AG04450 (cell line): ENCODE measurements at regions of chr17 and their contacts with region 1.

Region 1: GRCh38 chr17:76278952-76279741 is 14.0 kb downstream of the UBALD2 start:
- DNase-seq: peak; percentile 50
- H3K4me3 ChIP-seq: no peak overlapping the region
- H3K27ac ChIP-seq: no peak overlapping the region
- H3K27me3 ChIP-seq: no peaks in the 10 kb centered on the region
- CTCF ChIP-seq: peak; percentile 95

Region 2: DNA sequence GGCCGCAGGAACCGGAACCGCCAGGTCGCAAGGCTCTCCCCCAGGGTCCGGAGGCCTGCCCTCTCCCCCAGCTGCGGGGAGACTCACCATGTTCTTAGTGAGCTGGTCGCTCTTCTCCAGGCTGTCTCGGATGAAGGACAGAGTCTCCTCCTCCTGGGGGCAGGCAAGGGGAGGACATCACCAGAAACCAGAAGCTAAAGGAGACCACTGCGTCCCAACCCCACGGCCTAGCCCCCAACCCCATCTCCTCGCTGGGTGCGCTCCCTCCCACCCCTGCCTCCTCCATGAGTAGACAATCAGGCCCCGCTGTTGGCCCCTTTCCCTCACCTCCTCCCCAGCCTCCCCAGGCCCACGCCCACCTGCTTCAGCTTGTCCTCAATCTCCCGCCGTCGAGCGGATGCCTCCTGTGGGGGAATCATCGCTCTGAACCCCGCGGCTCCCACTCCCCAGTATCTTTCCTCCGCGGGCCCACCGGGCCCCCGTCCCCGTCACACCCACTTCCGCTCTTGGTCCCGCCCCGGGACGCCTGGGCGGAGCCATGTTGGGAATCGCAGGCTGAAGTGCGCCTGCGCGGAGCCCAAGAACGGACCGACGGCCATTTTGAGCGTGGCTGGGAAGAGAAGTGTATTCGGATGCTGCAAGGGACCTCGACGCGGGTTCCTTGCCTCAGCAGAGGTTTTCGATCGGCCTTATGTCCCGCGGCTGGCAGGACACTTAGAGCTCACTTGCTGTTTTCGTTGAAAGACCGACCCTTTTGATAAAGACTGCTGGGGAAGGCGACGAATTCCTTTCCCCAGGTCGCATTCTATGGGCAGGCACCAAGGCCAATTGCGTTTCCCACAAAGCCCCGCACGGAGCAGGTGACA is 175.6 kb before region 1 on chr17 and contains the start of gene EXOC7:
- CTCF ChIA-PET with region 1: interaction called, 22 read pairs
- POLR2A ChIA-PET with region 1: interaction called, 3 read pairs
- DNase-seq: peak; percentile 68
- H3K4me3 ChIP-seq: peak within 1 kb of the TSS; percentile 73
- H3K27ac ChIP-seq: peak within 1 kb of the TSS; percentile 52
- H3K27me3 ChIP-seq: no peaks in the 10 kb centered on the region
- CTCF ChIP-seq: no peak
- polyA plus RNA-seq, gene EXOC7: 97.6 and 114 TPM in 2 replicates

Region 3: GRCh38 chr17:76182016-76182764 is 97.0 kb before region 1 on chr17:
- CTCF ChIA-PET with region 1: interaction called, 14 read pairs
- POLR2A ChIA-PET with region 1: no interaction called
- DNase-seq: peak; percentile 62
- H3K4me3 ChIP-seq: no peak overlapping the region
- H3K27ac ChIP-seq: no peak overlapping the region
- H3K27me3 ChIP-seq: no peaks in the 10 kb centered on the region
- CTCF ChIP-seq: peak; percentile 91

Region 4: DNA sequence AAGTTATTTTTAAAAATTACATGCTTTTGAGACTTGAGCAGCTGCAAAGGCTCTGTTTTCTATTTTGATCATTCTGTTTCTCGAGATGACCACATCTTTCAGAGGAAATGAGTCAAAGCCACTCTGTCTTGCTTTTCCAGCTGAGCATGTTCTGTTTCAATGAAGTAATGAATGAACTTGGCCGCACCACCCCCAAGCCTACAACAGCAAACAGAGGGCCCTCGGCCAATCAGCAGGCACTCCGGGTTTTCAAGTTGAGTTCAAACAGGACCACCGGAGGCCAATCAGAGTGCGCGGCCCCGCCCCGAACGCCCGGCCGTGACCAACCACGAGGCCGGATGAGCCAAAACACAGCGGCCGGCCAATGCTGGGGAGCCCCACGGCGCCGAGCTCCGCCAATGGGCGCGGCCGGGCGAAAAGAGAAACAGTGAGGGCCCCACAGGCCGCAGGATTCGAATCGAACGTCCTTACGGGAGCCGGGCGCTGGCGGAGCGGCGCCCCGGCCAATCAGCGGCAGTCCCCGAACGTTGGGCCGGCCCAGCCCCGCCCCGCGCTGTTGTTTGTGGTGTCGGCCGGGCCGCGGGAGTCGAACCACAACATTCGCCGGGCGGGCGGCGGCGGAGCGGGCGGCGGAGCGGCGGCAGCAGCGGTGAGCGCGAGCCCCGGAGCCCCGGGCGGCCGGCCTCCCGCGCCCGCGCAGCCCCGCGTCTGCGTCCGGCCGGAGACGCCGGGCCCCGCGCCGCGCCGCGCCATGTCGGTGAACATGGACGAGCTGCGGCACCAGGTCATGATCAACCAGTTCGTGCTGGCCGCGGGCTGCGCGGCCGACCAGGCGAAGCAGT is 14.2 kb before region 1 on chr17 and contains the start of gene UBALD2:
- CTCF ChIA-PET with region 1: interaction called, 47 read pairs
- POLR2A ChIA-PET with region 1: interaction called, 9 read pairs
- DNase-seq: peak; percentile 100
- H3K4me3 ChIP-seq: peak within 1 kb of the TSS; percentile 80
- H3K27ac ChIP-seq: peak within 1 kb of the TSS; percentile 66
- H3K27me3 ChIP-seq: no peaks in the 10 kb centered on the region
- CTCF ChIP-seq: no peak
- polyA plus RNA-seq, gene UBALD2: 16.3 and 18.1 TPM in 2 replicates

Region 5: DNA sequence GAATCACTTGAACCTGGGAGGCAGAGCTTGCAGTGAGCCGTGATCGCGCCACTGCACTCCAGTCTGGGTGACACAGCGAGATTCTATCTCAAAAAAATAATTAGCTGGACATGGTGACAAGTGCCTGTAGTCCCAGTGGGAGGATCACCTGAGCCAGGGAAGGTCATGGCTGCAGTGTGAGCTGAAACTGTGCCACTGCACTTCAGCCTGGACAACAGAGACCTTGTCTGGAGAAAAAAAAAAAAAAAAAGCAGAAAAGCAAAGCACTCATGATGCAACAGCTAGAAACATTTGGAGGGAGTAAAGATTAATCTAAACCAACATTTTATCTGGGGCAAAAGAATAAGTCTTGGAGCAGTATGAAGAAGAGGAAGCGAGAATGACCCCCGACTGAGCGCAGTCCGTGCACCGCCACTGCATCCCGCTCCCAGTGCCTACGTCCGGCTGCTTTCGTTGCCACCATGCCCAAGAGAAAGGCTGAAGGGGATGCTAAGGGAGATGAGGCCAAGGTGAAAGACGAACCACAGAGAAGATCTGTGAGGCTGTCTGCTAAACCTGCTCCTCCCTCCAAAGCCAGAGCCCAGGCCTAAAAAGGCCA is 66.3 kb after region 1 on chr17:
- CTCF ChIA-PET with region 1: no interaction called
- POLR2A ChIA-PET with region 1: no interaction called
- DNase-seq: no peak
- H3K4me3 ChIP-seq: no peak overlapping the region
- H3K27ac ChIP-seq: peak overlapping the region; percentile 31
- H3K27me3 ChIP-seq: no peaks in the 10 kb centered on the region
- CTCF ChIP-seq: no peak

Region 6: GRCh38 chr17:76414334-76415295 is 135.5 kb after region 1 on chr17:
- CTCF ChIA-PET with region 1: no interaction called
- POLR2A ChIA-PET with region 1: no interaction called
- DNase-seq: no peak
- H3K4me3 ChIP-seq: no peak overlapping the region
- H3K27ac ChIP-seq: no peak overlapping the region
- H3K27me3 ChIP-seq: no peaks in the 10 kb centered on the region
- CTCF ChIP-seq: no peak